ENCODE measurements at regions of chr9 and their contacts with region 1.

Region 1: GRCh38 chr9:105593145-105593544 is 35.2 kb downstream of the FKTN start:
- DNase-seq: no peak
- H3K4me3 ChIP-seq: no peak overlapping the region
- H3K27ac ChIP-seq: no peak overlapping the region
- H3K4me1 ChIP-seq: no peaks in the 10 kb centered on the region
- H3K27me3 ChIP-seq: no peaks in the 10 kb centered on the region
- CTCF ChIP-seq: no peak
- EP300 ChIP-seq: no peak
- POLR2A ChIP-seq: no peak

Region 2: GRCh38 chr9:105103782-105104181 is 489.4 kb before region 1 on chr9:
- intact Hi-C with region 1: no loop called
- DNase-seq: no peak
- H3K4me3 ChIP-seq: no peak overlapping the region
- H3K27ac ChIP-seq: no peak overlapping the region
- H3K4me1 ChIP-seq: no peaks in the 10 kb centered on the region
- H3K27me3 ChIP-seq: no peaks in the 10 kb centered on the region
- CTCF ChIP-seq: no peak
- EP300 ChIP-seq: no peak
- POLR2A ChIP-seq: no peak

Region 3: DNA sequence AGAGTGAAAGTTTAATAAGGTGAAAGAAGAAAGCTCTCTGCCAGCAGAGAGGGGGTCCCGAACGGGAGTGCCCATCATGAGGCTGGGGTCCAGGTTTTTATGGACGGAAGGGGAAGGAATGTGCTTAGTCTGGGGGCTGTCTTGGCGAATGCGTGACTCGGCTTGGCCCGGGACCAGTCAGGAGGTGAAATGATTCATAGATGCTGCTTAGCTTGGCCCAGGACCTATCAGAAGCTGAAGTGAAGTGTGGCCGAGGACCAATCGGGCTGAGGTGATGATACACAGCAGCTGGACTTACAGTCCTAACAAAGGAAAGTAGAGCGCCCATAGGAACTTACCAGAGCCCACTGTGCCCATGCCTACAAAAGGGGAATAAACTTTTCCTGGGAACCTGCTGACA is 39.1 kb before region 1 on chr9:
- intact Hi-C with region 1: no loop called
- DNase-seq: peak in 1 of 5 donors; percentile 35
- H3K4me3 ChIP-seq: no peak overlapping the region
- H3K27ac ChIP-seq: no peak overlapping the region
- H3K4me1 ChIP-seq: peaks cover 2% of the 10 kb centered on the region
- H3K27me3 ChIP-seq: no peaks in the 10 kb centered on the region
- CTCF ChIP-seq: no peak
- EP300 ChIP-seq: no peak
- POLR2A ChIP-seq: no peak

Region 4: GRCh38 chr9:105656131-105656921 is 63.2 kb after region 1 on chr9:
- intact Hi-C with region 1: no loop called
- DNase-seq: peak in 4 of 5 donors; percentile 18 to 44 (median 28)
- H3K4me3 ChIP-seq: peak overlapping the region; percentile 24
- H3K27ac ChIP-seq: no peak overlapping the region
- H3K4me1 ChIP-seq: no peaks in the 10 kb centered on the region
- H3K27me3 ChIP-seq: no peaks in the 10 kb centered on the region
- CTCF ChIP-seq: no peak
- EP300 ChIP-seq: no peak
- POLR2A ChIP-seq: no peak

Region 5: GRCh38 chr9:107119735-107120134 is 1526.6 kb after region 1 on chr9:
- intact Hi-C with region 1: loop called in 1 of 4 experiments (anchors 2 kb)
- DNase-seq: no peak
- H3K4me3 ChIP-seq: no peak overlapping the region
- H3K27ac ChIP-seq: no peak overlapping the region
- H3K4me1 ChIP-seq: no peaks in the 10 kb centered on the region
- H3K27me3 ChIP-seq: no peaks in the 10 kb centered on the region
- CTCF ChIP-seq: no peak
- EP300 ChIP-seq: no peak
- POLR2A ChIP-seq: no peak